ENCODE measurements at regions of chr4 and their contacts with region 1.

Region 1: DNA sequence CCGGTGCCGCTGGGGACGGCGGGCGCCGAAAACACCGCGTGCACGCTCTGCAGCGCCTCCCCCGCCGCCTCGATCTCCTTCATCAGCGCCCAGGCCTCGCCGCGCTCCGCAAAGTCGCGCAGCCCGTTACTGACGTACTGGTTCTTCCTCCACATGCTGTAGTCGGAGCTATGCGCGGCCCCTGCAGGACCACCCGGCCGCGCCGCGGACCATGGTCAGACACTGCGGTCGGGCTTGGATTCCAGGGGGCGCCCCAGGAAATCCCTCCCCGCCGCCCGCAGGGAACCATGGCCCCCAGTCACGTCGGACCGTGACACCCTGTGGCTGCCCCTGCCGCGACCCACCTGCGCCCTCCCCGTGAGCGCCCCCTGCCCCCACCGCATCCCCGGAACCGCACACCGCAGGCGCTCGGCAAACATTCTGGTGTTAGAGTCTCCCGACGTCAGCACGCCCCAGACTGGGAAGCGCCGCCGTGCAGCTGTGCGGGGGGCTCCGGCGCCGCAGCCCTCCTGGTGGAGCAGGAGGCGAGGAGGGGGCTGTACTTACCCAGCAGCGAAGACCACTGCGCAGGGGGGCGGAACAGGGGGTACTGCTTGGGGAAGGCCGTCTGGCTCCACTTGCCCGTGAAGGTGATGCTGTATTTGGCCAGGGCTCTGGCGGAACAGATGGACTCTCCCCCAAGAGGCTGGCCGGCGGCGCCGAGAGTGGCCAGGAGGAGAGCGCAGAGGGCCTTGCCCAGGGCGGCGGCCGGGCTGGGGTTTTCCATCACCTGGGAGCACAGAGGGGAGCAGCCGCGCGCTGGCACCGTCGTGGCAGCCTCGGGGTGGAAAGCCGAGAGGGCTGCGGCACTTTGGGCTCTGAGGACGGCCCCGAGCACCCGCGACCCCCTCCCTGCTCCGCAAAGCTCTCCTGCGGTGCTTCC is 816 bp downstream of the SPON2 start:
- DNase-seq: no peak
- ATAC-seq: no peak

Region 2: DNA sequence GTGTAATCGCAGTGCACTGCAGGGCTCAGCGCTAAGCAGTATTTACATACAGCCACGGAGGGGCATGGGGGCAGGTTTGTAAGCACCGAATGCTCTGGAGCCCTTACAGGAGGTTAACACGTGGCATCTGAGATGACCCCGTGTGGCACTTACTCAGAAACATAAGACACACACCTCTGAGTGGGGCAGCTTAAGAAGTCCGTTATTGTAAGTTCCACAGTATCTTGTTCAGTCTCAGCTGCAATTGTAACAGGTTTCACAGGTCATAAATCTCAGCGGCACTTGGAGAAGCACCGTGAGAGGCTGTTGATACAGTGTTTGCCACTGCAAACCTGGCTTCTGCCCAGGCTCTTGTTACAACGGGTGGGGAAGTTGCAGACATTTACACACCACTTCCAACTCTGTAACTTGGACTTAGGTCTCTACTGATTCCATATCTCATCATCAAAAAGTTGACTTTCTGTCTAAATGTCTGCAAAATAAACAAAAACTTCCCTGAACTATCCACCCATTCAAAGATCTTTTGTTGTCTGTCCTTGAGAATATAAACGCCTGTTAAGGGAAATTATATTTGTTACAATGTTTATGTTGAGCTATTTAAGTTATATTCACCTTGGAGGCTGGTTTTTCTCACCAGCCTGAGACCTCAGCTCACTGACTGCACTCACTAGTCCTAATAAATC is 356.0 kb before region 1 on chr4:
- intact Hi-C with region 1: no loop called
- DNase-seq: no peak
- ATAC-seq: no peak

Region 3: GRCh38 chr4:1082215-1083182 is 89.1 kb before region 1 on chr4:
- intact Hi-C with region 1: no loop called
- DNase-seq: no peak
- ATAC-seq: peak; percentile 81

Region 4: DNA sequence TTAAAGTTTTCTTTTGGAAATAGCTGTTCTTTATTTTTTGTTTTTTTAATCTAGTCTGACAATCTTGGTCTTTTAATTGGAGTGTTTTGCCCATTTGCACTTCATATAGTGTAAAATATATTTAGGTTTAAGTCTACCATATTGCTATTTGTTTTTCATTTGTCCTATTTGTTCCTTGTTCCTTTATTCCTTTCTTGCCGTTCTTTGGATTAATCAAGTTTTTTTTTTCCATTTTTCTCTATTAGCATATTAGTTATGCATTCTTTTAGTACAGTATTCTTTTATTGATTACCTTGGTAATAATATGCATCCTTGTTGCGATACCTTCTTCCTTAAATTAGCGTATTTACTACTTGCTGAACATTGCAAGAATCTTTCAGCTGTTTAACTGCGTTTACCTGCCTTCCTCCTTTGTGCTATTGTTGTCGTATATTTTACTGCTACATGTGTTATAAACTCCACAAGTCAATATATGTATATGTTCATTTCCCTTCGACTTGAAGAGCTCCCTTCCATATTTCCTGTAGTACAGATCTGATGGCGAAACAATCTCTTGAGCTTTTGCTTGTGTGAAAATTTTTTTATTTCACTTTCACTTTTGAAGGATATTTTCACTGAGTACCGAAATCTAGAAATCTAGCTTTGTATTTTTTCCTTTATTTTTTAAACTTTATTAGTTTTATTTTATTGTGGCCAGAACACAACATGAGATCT is 34.3 kb before region 1 on chr4:
- intact Hi-C with region 1: no loop called
- DNase-seq: no peak
- ATAC-seq: no peak

Region 5: DNA sequence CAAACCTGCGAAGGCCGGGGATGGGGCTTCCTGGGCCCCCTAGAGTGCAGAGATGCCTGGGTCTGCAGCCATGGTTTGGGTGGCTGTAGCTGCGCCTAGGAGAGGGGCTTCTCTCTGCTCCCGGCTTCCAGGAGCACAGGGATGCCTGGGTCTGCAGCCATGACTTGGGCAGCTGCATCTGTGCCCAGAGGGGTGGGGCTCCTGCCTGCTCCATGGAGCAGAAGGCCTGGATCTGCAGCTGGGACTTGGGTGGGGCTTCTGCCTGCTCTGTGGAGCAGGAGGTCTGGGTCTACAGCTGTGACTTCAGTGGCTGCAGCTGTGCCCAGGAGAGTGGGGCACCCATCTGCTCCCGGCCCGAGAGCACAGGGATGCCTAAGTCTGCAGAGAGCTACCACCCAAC is 20.0 kb before region 1 on chr4:
- intact Hi-C with region 1: no loop called
- DNase-seq: no peak
- ATAC-seq: no peak

Region 6: DNA sequence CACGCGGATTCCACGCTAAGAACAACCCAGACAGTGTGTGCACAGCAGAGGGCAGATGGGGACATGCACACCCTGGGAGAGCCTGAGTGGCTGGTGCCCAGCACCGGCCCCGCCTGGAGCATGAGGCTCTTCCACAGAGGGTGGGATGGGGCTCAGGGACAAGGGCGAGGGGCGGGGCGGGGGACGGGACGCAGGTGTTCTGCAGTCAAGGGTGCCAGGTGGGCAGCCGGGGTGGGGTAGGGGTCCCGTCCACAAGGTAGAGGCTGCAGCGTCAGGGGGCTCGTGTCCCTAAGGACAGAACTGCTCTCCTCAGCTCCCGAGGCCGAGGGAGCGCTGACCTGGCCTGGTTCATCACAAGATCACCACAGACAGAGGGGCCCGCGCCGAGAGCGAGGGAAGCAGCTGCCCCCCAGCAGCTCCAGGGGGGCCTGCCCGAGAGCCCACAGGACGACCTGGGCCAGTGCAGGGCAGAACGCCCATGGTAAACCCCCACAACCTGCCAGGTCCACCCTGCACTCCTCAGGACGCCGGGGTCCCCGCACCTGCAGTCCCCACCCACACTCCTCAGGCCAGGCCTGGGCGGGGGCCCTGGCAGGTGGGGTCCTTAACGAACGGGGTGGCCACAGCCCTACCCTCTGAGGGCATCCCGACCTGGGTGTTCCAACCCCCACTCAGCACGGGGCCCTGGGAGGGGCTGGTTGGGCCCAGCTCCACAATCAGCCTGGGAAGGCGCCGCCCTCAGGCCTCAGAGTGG is 50.6 kb after region 1 on chr4:
- intact Hi-C with region 1: loop called (anchors 10 kb)
- DNase-seq: no peak
- ATAC-seq: no peak

Measured in sciatic nerve (tissue), 2 donors.